Ovary (tissue), 10 donors: ENCODE measurements at regions of chr10 and their contacts with region 1.

Region 1: GRCh38 chr10:88926566-88927415 is 25.8 kb downstream of the ACTA2 start:
- DNase-seq: no peak
- H3K4me3 ChIP-seq: peak overlapping the region; percentile 9
- H3K27ac ChIP-seq: peak overlapping the region; percentile 9 to 70
- H3K4me1 ChIP-seq: peaks cover 6% of the 10 kb centered on the region
- H3K27me3 ChIP-seq: no peaks in the 10 kb centered on the region
- CTCF ChIP-seq: no peak
- EP300 ChIP-seq: no peak
- POLR2A ChIP-seq: no peak

Region 2: DNA sequence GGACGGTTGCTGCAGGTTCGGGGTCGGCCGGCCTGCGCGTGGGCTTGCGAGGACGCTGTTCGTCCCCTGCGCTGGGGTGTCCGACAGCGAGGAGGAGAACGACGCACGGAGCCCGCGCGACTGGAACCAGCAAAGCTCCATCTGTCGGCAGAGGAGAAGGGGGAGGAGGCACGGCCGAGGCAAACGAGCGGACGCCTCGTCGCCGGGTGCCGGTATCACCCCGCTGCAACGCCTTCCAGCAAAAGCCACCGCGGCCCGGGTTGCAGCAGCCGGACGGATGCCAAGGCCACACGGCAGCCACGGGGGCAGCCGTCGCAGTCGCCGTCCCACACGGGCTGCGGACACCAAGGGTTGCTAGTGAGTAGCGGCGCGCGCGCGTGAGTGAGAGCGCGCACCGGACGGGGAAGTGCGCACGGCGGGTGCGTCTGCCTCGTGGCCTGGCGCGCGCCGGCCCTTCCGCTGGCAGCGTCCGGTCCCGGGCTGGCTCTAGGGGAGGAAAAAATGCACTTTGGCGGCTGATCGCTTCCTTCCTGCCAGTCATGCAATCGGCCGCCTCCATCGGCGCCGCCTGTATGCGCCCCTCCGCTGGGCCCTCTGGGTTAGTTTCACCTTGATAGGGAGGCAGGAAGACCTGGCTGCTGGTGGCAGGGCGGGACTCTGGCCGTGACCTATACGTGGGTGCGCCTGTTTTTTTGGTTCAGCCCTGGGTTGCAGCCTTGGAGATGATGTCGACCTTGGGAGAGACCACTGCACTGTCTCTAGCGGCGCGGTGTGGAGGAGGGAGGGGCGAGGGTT is 46.3 kb before region 1 on chr10:
- intact Hi-C with region 1: loop called (anchors 5 kb)
- DNase-seq: peak; percentile 75 to 88 (median 82)
- H3K4me3 ChIP-seq: peak overlapping the region; percentile 86
- H3K27ac ChIP-seq: peak overlapping the region; percentile 93 to 94
- H3K4me1 ChIP-seq: peaks cover 8% of the 10 kb centered on the region
- H3K27me3 ChIP-seq: no peaks in the 10 kb centered on the region
- CTCF ChIP-seq: peak in 1 of 3 donors; percentile 3
- EP300 ChIP-seq: no peak
- POLR2A ChIP-seq: peak; percentile 55